Right ventricle myocardium inferior (tissue), 1 donor: ENCODE measurements at regions of chr22 and their contacts with region 1.

Region 1: GRCh38 chr22:37316875-37317371 is 34.6 kb downstream of the CYTH4 start:
- DNase-seq: peak; percentile 85
- ATAC-seq: peak; percentile 83

Region 2: GRCh38 chr22:35664955-35665599 is 1651.8 kb before region 1 on chr22:
- intact Hi-C with region 1: no loop called
- DNase-seq: no peak
- ATAC-seq: no peak

Region 3: DNA sequence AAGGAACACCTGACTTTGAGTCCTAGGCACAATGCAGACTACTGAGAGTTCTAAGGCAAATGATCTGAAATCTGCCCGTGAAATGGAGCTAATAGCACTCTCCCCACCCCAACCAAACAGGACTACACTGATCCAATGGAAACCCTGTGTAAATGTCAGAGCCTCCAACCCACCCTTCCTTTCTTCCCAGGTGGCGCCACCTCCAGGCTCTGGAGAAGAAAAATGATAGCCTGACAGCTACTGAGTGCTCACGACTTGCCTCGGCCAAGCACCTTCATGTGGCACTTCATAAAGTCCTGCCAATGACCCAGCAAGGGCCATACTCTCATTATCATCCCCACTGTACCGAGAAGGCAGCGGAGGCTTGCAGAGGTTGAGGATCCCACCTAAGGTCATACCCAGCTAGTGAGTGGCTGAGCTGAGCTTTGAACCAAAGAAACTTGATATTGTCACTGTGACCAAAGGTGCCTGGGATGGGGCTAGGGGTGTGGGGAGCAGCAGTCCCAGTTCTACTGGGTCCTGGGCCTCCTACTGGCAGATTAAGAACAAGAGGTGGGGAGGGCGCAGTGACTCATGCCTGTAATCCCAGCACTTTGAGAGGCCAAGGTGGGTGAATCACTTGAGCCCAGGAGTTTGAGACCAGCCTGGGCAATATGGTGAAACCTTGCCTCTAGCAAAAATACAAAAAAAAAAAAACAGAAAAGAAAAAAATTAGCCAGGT is 318.1 kb before region 1 on chr22:
- intact Hi-C with region 1: no loop called
- DNase-seq: no peak
- ATAC-seq: no peak

Region 4: GRCh38 chr22:37032546-37033460 is 284.1 kb before region 1 on chr22:
- intact Hi-C with region 1: no loop called
- DNase-seq: no peak
- ATAC-seq: peak; percentile 22

Region 5: GRCh38 chr22:37428649-37429586 is 112.0 kb after region 1 on chr22:
- intact Hi-C with region 1: loop called (anchors 5 kb)
- DNase-seq: no peak
- ATAC-seq: no peak

Region 6: GRCh38 chr22:37457093-37457893 is 140.4 kb after region 1 on chr22:
- intact Hi-C with region 1: loop called (anchors 1 kb)
- DNase-seq: peak; percentile 76
- ATAC-seq: peak; percentile 72